ENCODE measurements at regions of chr2 and their contacts with region 1.

Region 1: DNA sequence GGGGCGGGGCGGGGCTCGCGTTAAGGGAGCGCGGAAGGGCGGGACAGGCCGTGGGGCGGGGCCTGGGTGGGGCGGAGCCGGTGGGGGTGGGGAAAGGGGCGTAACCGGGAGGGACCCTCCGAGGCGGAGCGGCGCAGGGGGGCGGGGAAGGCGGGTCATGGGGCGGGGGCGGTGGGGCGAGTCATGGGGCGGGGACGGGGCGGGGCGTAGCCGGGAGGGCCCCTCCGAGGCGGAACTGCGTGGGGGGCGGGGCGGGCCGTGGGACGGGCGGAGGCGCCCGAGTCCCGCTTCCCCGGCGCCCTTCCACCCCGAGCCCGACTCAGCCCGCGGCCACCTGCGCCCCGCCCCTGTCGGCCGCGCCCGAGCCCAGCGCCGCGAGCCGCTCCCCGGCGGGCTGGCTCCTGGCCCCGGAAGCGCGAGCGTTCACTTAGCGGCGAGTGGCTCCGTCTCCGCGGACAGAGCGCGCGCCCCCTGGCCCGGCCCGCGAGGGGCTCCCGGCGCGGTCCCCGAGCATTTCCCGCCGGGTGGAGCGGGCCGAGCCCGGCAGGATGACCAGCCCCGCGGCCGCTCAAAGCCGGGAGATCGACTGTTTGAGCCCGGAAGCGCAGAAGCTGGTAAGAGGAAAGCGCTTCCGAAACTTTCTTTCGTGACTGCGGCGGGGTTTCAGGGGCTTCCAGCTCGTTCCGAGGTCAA is 64.7 kb downstream of the LRRFIP1 start:
- DNase-seq: peak; percentile 90 to 98 (median 94)
- H3K4me3 ChIP-seq: peak overlapping the region; percentile 79
- H3K4me3 Mint-ChIP-seq: peak overlapping the region; percentile 87 to 96 (median 92)
- H3K27ac ChIP-seq: peak overlapping the region; percentile 94
- H3K27ac Mint-ChIP-seq: peak overlapping the region; percentile 90 to 98 (median 96)
- H3K4me1 ChIP-seq: peaks cover 77% of the 10 kb centered on the region
- H3K4me1 Mint-ChIP-seq: peaks cover 75 to 82% (median 81%) of the 10 kb centered on the region in 3 donors
- H3K27me3 ChIP-seq: no peaks in the 10 kb centered on the region
- H3K27me3 Mint-ChIP-seq: no peaks in the 10 kb centered on the region

Region 2: DNA sequence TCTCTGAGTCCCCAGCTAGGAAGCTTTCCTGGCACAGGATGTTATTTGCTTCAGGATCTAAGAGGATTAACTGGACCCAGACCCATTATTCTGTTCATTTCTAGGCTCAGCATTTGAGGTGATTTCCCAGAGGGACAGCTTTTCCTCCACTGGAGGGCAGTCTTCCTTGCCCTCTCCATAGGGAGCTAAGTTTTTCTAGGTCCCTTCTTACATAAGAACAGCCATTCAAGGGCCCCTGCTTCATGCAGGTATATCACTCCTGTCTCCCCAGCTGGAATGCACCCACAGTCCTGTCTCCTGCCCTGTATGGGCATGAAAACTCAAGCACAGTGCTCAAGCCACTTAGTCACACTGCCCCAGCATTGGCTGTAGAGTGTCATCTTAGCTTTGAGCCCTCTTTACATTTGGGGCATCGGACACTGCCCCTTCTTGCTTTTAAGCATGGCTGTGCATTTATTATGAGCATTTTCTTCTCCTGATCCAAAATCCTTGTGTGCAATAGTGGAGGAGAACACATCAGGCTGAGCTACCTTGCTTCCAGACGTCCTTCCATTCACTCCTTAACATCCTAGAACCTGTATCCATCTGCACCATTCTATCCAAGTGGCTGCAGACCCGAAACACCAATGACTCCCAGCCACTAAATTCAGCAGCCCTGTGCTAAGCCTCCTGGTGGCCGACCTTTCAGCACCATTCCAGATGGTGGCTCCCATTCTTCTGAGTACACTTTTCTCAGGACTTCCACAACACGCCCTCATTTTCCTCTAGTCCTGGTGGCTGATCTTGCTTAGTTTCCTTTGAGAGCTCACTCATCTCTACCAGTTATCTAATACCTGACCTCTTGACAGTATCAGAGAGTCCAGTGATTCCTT is 526.4 kb before region 1 on chr2:
- CTCF ChIA-PET with region 1: no interaction called
- POLR2A ChIA-PET with region 1: no interaction called
- DNase-seq: no peak
- H3K4me3 ChIP-seq: no peak overlapping the region
- H3K4me3 Mint-ChIP-seq: no peak overlapping the region
- H3K27ac ChIP-seq: no peak overlapping the region
- H3K27ac Mint-ChIP-seq: peak overlapping the region in 2 of 8 donors; percentile 7 to 23
- H3K4me1 ChIP-seq: no peaks in the 10 kb centered on the region
- H3K4me1 Mint-ChIP-seq: no peaks in the 10 kb centered on the region
- H3K27me3 ChIP-seq: no peaks in the 10 kb centered on the region
- H3K27me3 Mint-ChIP-seq: peaks cover 18 to 48% of the 10 kb centered on the region in 2 donors

Region 3: GRCh38 chr2:237616734-237617586 is 75.1 kb before region 1 on chr2:
- CTCF ChIA-PET with region 1: no interaction called
- POLR2A ChIA-PET with region 1: no interaction called
- DNase-seq: peak in 1 of 5 donors; percentile 53
- H3K4me3 ChIP-seq: no peak overlapping the region
- H3K4me3 Mint-ChIP-seq: peak overlapping the region in 4 of 7 donors; percentile 13 to 61 (median 36)
- H3K27ac ChIP-seq: no peak overlapping the region
- H3K27ac Mint-ChIP-seq: peak overlapping the region in 4 of 8 donors; percentile 2 to 71 (median 48)
- H3K4me1 ChIP-seq: peaks cover 19% of the 10 kb centered on the region
- H3K4me1 Mint-ChIP-seq: peaks cover 12 to 17% (median 15%) of the 10 kb centered on the region in 3 donors
- H3K27me3 ChIP-seq: no peaks in the 10 kb centered on the region
- H3K27me3 Mint-ChIP-seq: peaks cover 5 to 11% of the 10 kb centered on the region in 2 donors

Region 4: GRCh38 chr2:237702441-237703391 is 10.7 kb after region 1 on chr2:
- CTCF ChIA-PET with region 1: interaction called, 20 read pairs
- POLR2A ChIA-PET with region 1: interaction called, 18 read pairs
- DNase-seq: peak in 2 of 5 donors; percentile 37 to 57
- H3K4me3 ChIP-seq: peak overlapping the region; percentile 21
- H3K4me3 Mint-ChIP-seq: peak overlapping the region; percentile 51 to 84 (median 69)
- H3K27ac ChIP-seq: peak overlapping the region; percentile 44
- H3K27ac Mint-ChIP-seq: peak overlapping the region; percentile 69 to 98 (median 94)
- H3K4me1 ChIP-seq: peaks cover 98% of the 10 kb centered on the region
- H3K4me1 Mint-ChIP-seq: peaks cover 95 to 99% (median 95%) of the 10 kb centered on the region in 3 donors
- H3K27me3 ChIP-seq: no peaks in the 10 kb centered on the region
- H3K27me3 Mint-ChIP-seq: no peaks in the 10 kb centered on the region

Region 5: GRCh38 chr2:237708065-237708398 is 16.0 kb after region 1 on chr2:
- CTCF ChIA-PET with region 1: interaction called, 16 read pairs
- POLR2A ChIA-PET with region 1: interaction called, 13 read pairs
- DNase-seq: no peak
- H3K4me3 ChIP-seq: no peak overlapping the region
- H3K4me3 Mint-ChIP-seq: peak overlapping the region in 1 of 7 donors; percentile 5
- H3K27ac ChIP-seq: no peak overlapping the region
- H3K27ac Mint-ChIP-seq: peak overlapping the region in 7 of 8 donors; percentile 32 to 97 (median 82)
- H3K4me1 ChIP-seq: peaks cover 53% of the 10 kb centered on the region
- H3K4me1 Mint-ChIP-seq: peaks cover 66 to 88% (median 71%) of the 10 kb centered on the region in 3 donors
- H3K27me3 ChIP-seq: no peaks in the 10 kb centered on the region
- H3K27me3 Mint-ChIP-seq: no peaks in the 10 kb centered on the region

Region 6: GRCh38 chr2:237744613-237745249 is 52.7 kb after region 1 on chr2:
- CTCF ChIA-PET with region 1: interaction called, 39 read pairs
- POLR2A ChIA-PET with region 1: interaction called, 7 read pairs
- DNase-seq: peak; percentile 62 to 84 (median 72)
- H3K4me3 ChIP-seq: no peak overlapping the region
- H3K4me3 Mint-ChIP-seq: no peak overlapping the region
- H3K27ac ChIP-seq: no peak overlapping the region
- H3K27ac Mint-ChIP-seq: peak overlapping the region; percentile 47 to 92 (median 82)
- H3K4me1 ChIP-seq: no peaks in the 10 kb centered on the region
- H3K4me1 Mint-ChIP-seq: peaks cover 37 to 64% (median 45%) of the 10 kb centered on the region in 3 donors
- H3K27me3 ChIP-seq: no peaks in the 10 kb centered on the region
- H3K27me3 Mint-ChIP-seq: no peaks in the 10 kb centered on the region

Measured in CD8-positive, alpha-beta memory T cell (primary cell).